ENCODE measurements at regions of chr2 and their contacts with region 1.

Region 1: GRCh38 chr2:70301344-70302194 is at the start of gene FAM136A:
- DNase-seq: peak; percentile 56
- ATAC-seq: peak; percentile 99
- H3K4me3 ChIP-seq: peak within 1 kb of the TSS; percentile 90
- H3K27ac ChIP-seq: peak within 1 kb of the TSS; percentile 64
- H3K4me1 ChIP-seq: peaks cover 3% of the 10 kb centered on the region; the same call in 1 of the 2 replicates
- H3K27me3 ChIP-seq: no peaks in the 10 kb centered on the region
- CTCF ChIP-seq: peak; percentile 84
- POLR2A ChIP-seq: no peak
- RAD21 ChIP-seq: peak; percentile 43
- total RNA-seq, gene FAM136A: 19.9 and 35.0 TPM in 2 replicates

Region 2: DNA sequence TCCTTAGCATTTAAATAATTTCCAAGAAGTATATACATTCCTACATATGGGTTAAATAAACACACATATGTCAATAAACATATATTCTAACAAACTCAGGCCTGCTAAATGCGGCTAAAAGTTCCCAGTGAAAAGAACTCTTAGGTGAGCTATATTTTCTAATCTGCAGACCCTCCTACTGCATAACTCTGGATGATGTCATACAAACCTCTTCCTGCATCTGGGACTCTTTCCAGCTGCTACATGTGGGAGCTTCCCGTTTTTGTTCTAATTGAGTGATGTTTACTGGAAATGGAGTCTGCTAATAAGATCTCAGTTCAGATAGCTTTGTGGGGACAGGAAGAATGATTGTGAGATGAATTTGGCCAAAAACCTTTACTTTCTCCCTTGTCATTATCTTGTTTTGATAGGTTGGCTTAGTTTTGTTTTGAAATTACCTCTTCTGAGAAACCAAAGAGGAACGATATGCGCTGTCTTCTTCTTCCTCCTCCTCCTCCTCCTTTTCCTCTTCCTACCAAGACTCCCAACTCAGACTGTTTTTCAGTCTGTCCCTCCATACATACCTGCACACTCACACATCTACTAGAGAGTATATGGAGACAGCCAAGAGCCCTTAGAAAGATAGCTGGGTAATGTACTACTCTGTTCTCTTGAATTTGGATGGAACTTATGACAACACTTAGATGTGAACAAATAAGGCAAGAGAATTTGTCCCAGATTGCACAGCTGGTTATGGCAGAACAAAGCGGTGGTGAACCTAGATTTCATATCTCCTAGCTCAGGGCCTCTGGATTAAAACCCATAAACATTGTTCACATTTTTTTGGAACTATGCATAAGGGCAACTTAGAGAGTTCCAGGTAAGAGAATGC is 618.2 kb before region 1 on chr2:
- CTCF ChIA-PET with region 1: no interaction called
- POLR2A ChIA-PET with region 1: no interaction called
- dilution Hi-C with region 1: no loop called
- in situ Hi-C with region 1: no loop called
- intact Hi-C with region 1: no loop called
- DNase-seq: peak; percentile 85
- ATAC-seq: peak; percentile 78
- H3K4me3 ChIP-seq: no peak overlapping the region
- H3K27ac ChIP-seq: peak overlapping the region; percentile 52; the same call in 1 of the 2 replicates
- H3K4me1 ChIP-seq: peaks cover 7% of the 10 kb centered on the region
- H3K27me3 ChIP-seq: no peaks in the 10 kb centered on the region
- CTCF ChIP-seq: no peak
- POLR2A ChIP-seq: no peak
- RAD21 ChIP-seq: no peak

Region 3: GRCh38 chr2:70616168-70616694 is 314.7 kb after region 1 on chr2:
- CTCF ChIA-PET with region 1: interaction called, 36 read pairs
- POLR2A ChIA-PET with region 1: interaction called, 6 read pairs
- dilution Hi-C with region 1: no loop called
- in situ Hi-C with region 1: loop called (anchors 5 kb)
- intact Hi-C with region 1: loop called (anchors 1 kb)
- DNase-seq: no peak
- ATAC-seq: no peak
- H3K4me3 ChIP-seq: no peak overlapping the region
- H3K27ac ChIP-seq: no peak overlapping the region
- H3K4me1 ChIP-seq: no peaks in the 10 kb centered on the region
- H3K27me3 ChIP-seq: peaks cover 18% of the 10 kb centered on the region
- CTCF ChIP-seq: no peak
- POLR2A ChIP-seq: no peak
- RAD21 ChIP-seq: no peak

Region 4: GRCh38 chr2:70647873-70648481 is 346.4 kb after region 1 on chr2:
- CTCF ChIA-PET with region 1: interaction called, 6 read pairs
- POLR2A ChIA-PET with region 1: no interaction called
- dilution Hi-C with region 1: no loop called
- in situ Hi-C with region 1: no loop called
- intact Hi-C with region 1: loop called (anchors 1 kb)
- DNase-seq: peak; percentile 44
- ATAC-seq: peak; percentile 93
- H3K4me3 ChIP-seq: no peak overlapping the region
- H3K27ac ChIP-seq: no peak overlapping the region
- H3K4me1 ChIP-seq: no peaks in the 10 kb centered on the region
- H3K27me3 ChIP-seq: peaks cover 5% of the 10 kb centered on the region
- CTCF ChIP-seq: peak; percentile 88
- POLR2A ChIP-seq: no peak
- RAD21 ChIP-seq: peak; percentile 78

Region 5: GRCh38 chr2:70984576-70985282 is 683.2 kb after region 1 on chr2:
- CTCF ChIA-PET with region 1: no interaction called
- POLR2A ChIA-PET with region 1: no interaction called
- dilution Hi-C with region 1: no loop called
- in situ Hi-C with region 1: loop called (anchors 10 kb)
- intact Hi-C with region 1: no loop called
- DNase-seq: peak; percentile 37
- ATAC-seq: peak; percentile 92
- H3K4me3 ChIP-seq: no peak overlapping the region
- H3K27ac ChIP-seq: no peak overlapping the region
- H3K4me1 ChIP-seq: no peaks in the 10 kb centered on the region
- H3K27me3 ChIP-seq: no peaks in the 10 kb centered on the region
- CTCF ChIP-seq: peak; percentile 70
- POLR2A ChIP-seq: no peak
- RAD21 ChIP-seq: peak; percentile 54

Measured in IMR-90 (cell line).